ENCODE measurements at regions of chr3 and their contacts with region 1.

Region 1: DNA sequence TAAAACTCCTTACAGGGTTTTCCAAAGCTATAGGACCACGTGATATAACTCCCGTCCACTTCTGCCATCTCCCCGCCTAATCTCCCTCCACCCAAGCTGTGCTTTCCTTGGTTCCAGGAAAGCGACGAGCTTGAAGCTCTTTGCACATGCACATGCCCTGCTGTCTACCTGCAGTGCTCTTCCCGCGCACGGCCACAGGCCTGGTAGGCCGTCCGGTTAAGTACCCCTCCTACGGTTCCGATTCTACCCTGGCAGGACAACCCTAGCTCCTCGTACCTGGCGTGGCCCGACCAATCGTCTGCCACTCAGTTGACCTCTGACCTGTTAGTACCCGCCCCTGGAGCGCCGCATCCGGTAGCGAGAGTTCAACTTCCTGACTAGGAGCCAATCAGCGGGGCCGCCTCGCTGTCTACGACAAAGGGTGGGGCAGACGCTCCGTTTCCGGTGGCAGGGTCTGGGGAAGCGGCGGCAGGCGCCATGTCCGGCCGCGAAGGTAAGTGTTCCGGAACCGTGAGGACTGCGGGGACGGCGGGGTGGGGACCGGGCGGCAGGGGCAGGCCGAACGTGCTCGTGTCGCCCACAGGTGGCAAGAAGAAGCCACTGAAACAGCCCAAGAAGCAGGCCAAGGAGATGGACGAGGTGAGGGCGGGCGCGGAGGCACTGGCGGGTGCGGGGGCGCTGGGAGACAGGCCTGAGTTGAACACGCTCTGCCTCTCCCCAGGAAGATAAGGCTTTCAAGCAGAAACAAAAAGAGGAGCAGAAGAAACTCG is at the starts of genes CCDC51 and TMA7:
- DNase-seq: peak; percentile 90 to 98 (median 96)
- ATAC-seq: peak; percentile 97
- H3K4me3 ChIP-seq: peak within 1 kb of the TSS; percentile 78
- H3K4me3 Mint-ChIP-seq: peak within 1 kb of the TSS; percentile 86 to 100 (median 94)
- H3K27ac ChIP-seq: peak within 1 kb of the TSS; percentile 93
- H3K27ac Mint-ChIP-seq: peak within 1 kb of the TSS; percentile 92 to 100 (median 98)
- H3K4me1 ChIP-seq: peaks cover 18 to 19% of the 10 kb centered on the region in 2 donors
- H3K4me1 Mint-ChIP-seq: peaks cover 16 to 50% (median 34%) of the 10 kb centered on the region in 7 donors
- H3K27me3 ChIP-seq: no peaks in the 10 kb centered on the region
- H3K27me3 Mint-ChIP-seq: no peaks in the 10 kb centered on the region
- total RNA-seq, gene CCDC51: 3.6 to 16.5 (median 5.0) TPM
- total RNA-seq, gene TMA7: 193 to 278 (median 236) TPM

Region 2: GRCh38 chr3:48232734-48233133 is 207.3 kb before region 1 on chr3:
- CTCF ChIA-PET with region 1: interaction called, 4 read pairs
- POLR2A ChIA-PET with region 1: no interaction called
- intact Hi-C with region 1: loop called (anchors 1 kb)
- DNase-seq: peak; percentile 21 to 54 (median 44)
- ATAC-seq: peak; percentile 92
- H3K4me3 ChIP-seq: no peak overlapping the region
- H3K4me3 Mint-ChIP-seq: no peak overlapping the region
- H3K27ac ChIP-seq: no peak overlapping the region
- H3K27ac Mint-ChIP-seq: no peak overlapping the region
- H3K4me1 ChIP-seq: no peaks in the 10 kb centered on the region
- H3K4me1 Mint-ChIP-seq: peaks cover 0 to 6% (median 3%) of the 10 kb centered on the region in 7 donors
- H3K27me3 ChIP-seq: no peaks in the 10 kb centered on the region
- H3K27me3 Mint-ChIP-seq: peaks cover 0 to 6% (median 0%) of the 10 kb centered on the region in 5 donors

Region 3: GRCh38 chr3:48400824-48401433 is 39.1 kb before region 1 on chr3:
- CTCF ChIA-PET with region 1: interaction called, 115 read pairs
- POLR2A ChIA-PET with region 1: interaction called, 14 read pairs
- intact Hi-C with region 1: loop called (anchors 1 kb)
- DNase-seq: peak; percentile 33 to 76 (median 66)
- ATAC-seq: peak; percentile 86
- H3K4me3 ChIP-seq: no peak overlapping the region
- H3K4me3 Mint-ChIP-seq: no peak overlapping the region
- H3K27ac ChIP-seq: no peak overlapping the region
- H3K27ac Mint-ChIP-seq: peak overlapping the region in 1 of 9 donors; percentile 47
- H3K4me1 ChIP-seq: no peaks in the 10 kb centered on the region
- H3K4me1 Mint-ChIP-seq: peaks cover 0 to 3% (median 0%) of the 10 kb centered on the region in 7 donors
- H3K27me3 ChIP-seq: no peaks in the 10 kb centered on the region
- H3K27me3 Mint-ChIP-seq: peaks cover 0 to 7% (median 3%) of the 10 kb centered on the region in 5 donors

Region 4: GRCh38 chr3:48472915-48473616 is 33.1 kb after region 1 on chr3:
- CTCF ChIA-PET with region 1: interaction called, 22 read pairs
- POLR2A ChIA-PET with region 1: interaction called, 22 read pairs
- intact Hi-C with region 1: loop called (anchors 1 kb)
- DNase-seq: peak; percentile 79 to 98 (median 95)
- ATAC-seq: peak; percentile 93
- H3K4me3 ChIP-seq: peak overlapping the region; percentile 92
- H3K4me3 Mint-ChIP-seq: peak overlapping the region; percentile 87 to 100 (median 94)
- H3K27ac ChIP-seq: peak overlapping the region; percentile 95
- H3K27ac Mint-ChIP-seq: peak overlapping the region; percentile 90 to 100 (median 99)
- H3K4me1 ChIP-seq: peaks cover 46 to 54% of the 10 kb centered on the region in 2 donors
- H3K4me1 Mint-ChIP-seq: peaks cover 41 to 75% (median 64%) of the 10 kb centered on the region in 7 donors
- H3K27me3 ChIP-seq: no peaks in the 10 kb centered on the region
- H3K27me3 Mint-ChIP-seq: peaks cover 0 to 2% (median 0%) of the 10 kb centered on the region in 5 donors

Region 5: DNA sequence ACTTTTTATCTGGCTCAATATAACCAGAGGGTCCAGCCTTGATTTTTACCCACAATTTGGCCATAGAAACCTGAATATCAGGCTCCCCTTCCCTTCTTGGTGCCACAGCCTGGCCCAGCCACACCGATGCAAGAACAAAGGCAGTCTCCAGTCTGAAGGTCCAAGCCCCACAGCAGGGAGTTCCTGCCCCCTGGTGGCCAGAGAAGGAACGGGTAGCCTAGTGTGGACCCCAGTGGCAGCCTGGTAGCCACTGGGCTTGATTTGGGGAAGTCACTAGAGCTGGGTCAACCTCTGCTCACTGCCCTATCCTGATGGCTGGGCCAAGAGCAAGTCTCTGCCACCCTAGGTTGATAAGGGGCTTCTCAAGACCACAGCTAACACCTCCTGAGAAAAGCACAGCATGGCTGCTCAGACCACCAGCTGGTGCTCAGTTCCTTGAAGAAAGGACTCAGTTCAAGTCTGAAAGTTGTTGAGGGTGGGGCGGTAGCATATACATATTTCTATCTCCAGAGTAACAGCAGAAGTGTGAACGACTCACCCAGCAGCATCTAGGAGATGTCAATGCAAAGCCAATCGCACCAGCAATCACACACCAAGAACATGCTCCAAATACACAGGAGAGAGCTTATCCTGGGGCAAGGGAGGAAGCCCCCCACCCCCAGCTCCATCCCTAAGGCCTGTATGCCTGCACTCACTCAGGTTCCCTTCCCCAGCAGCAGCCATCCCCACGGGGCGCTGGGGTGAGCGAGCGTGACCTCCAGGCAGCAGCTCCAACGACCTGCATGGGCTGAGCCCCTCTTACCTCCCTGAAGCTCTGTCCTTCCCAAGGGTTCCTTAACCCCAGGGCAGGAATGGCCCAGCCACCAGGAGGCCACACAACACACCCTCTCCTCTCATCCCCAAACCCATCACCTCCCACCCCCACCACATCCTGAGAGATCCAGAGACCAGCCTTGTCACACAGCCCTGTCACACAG is 109.0 kb after region 1 on chr3:
- CTCF ChIA-PET with region 1: interaction called, 50 read pairs
- POLR2A ChIA-PET with region 1: interaction called, 4 read pairs
- intact Hi-C with region 1: loop called (anchors 1 to 2 kb)
- DNase-seq: peak; percentile 66 to 86 (median 78)
- ATAC-seq: peak; percentile 97
- H3K4me3 ChIP-seq: no peak overlapping the region
- H3K4me3 Mint-ChIP-seq: no peak overlapping the region
- H3K27ac ChIP-seq: no peak overlapping the region
- H3K27ac Mint-ChIP-seq: peak overlapping the region in 2 of 9 donors; percentile 9 to 48
- H3K4me1 ChIP-seq: no peaks in the 10 kb centered on the region
- H3K4me1 Mint-ChIP-seq: peaks cover 6 to 38% (median 20%) of the 10 kb centered on the region in 7 donors
- H3K27me3 ChIP-seq: no peaks in the 10 kb centered on the region
- H3K27me3 Mint-ChIP-seq: no peaks in the 10 kb centered on the region